Body of pancreas (tissue), 4 donors: ENCODE measurements at regions of chr9 and their contacts with region 1.

Region 1: DNA sequence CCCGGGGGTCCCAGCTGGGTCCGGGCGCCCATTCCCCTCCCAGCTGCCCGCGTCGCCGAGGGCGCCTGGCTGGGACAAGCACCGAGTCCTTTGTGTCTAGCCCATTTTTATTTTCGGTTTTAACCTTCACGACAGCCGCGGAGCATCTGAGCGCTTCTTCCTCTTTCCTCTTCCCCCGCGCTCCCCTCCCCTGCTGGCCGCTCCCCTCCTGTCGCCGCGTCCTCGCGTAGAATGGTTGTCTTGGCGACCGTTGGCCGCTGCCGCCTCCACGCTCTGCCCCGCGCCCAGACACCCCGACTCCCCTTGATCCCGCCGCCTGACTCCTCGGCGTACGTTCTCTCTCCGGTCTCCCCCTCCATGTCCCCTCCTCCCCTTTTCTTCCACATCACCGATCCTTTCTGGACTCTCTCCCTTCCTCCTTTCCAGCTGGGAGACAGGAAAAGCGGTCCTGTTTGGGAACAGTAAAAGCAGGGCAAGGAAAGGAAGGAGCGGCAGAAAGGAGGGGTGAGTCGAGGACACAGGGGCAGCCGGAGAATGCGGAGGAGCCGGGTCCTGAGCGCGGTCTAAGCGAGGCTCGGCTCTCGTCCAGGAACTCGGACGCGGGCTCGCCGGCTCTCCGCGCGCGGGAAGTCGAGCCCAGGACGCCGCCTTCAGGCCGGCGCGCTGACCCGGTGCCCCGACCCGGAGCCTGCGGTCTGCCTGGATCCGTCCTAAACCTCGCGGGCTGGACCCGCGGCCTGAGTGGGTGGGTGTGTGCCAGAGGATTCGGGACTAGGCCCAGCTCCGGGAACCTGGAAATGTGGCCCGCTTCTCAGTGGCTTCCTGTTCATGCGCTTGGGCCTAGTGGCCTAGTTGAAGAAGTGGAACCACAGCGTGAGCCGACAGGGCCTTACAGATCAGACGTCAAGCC is 841 bp downstream of the CDKN2B-AS1 start:
- DNase-seq: peak; percentile 53 to 70 (median 56)
- ATAC-seq: peak; percentile 70
- H3K4me3 ChIP-seq: peak overlapping the region; percentile 61 to 86
- H3K27ac ChIP-seq: peak overlapping the region in 3 of 4 donors; percentile 25 to 81 (median 51)
- H3K4me1 ChIP-seq: peaks cover 17% of the 10 kb centered on the region
- H3K27me3 ChIP-seq: no peaks in the 10 kb centered on the region
- CTCF ChIP-seq: peak in 3 of 7 experiments; percentile 11 to 23 (median 14)
- POLR2A ChIP-seq: peak in 2 of 3 donors; percentile 3 to 29

Region 2: DNA sequence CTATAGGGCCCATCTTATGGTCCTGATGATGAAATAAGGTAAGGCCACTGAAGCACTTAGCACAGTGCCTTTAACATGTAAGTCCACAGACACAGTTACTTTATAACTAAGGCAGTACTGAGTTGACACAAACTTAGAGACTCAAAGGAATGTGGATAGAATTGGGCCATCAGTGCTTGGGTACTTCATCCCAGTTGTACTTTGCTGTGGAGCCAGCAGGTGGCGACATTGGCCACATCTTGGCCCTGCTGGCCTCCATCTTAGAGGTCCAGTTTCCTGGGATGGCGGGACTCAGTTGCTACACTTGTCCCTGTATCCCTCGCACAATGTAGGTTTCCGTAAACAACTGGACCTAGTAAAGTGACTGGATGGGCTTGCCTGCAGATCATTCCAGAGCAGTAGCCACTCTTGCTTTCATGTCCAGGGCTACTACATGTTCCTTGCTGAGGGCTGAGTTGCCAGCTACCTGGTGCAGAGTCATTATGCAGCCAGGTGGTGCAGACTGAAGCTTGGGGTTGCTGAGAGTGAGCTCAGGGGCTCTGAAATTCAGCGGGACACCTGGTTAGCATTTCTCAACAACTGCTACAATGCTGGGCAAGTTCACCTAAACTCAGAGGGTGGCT is 182.4 kb before region 1 on chr9:
- intact Hi-C with region 1: loop called (anchors 5 kb)
- DNase-seq: peak; percentile 77 to 83 (median 80)
- ATAC-seq: peak; percentile 89
- H3K4me3 ChIP-seq: no peak overlapping the region
- H3K27ac ChIP-seq: no peak overlapping the region
- H3K4me1 ChIP-seq: peaks cover 13% of the 10 kb centered on the region
- H3K27me3 ChIP-seq: no peaks in the 10 kb centered on the region
- CTCF ChIP-seq: peak; percentile 69 to 90 (median 89)
- POLR2A ChIP-seq: no peak

Region 3: DNA sequence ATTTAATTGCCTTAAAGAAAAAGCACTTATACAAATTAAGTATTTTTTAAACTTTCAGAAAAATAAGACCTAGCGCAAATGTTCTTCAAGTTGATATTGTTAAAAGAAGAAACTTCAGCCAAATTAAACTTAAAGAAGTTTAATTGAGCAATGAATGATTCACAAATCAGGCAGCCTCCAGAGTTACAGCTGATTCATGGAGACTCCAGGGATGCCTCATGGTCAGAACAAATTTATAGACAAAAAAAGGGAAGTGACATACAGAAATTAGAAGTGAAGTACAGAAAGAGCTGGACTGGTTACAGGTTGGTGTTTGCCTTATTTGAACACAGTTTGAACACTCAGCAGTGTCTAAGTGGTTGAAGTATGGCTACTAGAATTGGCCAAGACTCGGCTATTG is 61.6 kb before region 1 on chr9:
- intact Hi-C with region 1: loop called (anchors 10 kb)
- DNase-seq: no peak
- ATAC-seq: no peak
- H3K4me3 ChIP-seq: no peak overlapping the region
- H3K27ac ChIP-seq: no peak overlapping the region
- H3K4me1 ChIP-seq: no peaks in the 10 kb centered on the region
- H3K27me3 ChIP-seq: no peaks in the 10 kb centered on the region
- CTCF ChIP-seq: no peak
- POLR2A ChIP-seq: no peak